PC-9 (cell line): ENCODE measurements at regions of chr18 and their contacts with region 1.

Region 1: GRCh38 chr18:5998907-5999306 is 103.6 kb upstream of the TMEM200C start:
- DNase-seq: no peak
- H3K4me3 ChIP-seq: no peak overlapping the region
- H3K27ac ChIP-seq: no peak overlapping the region
- H3K4me1 ChIP-seq: no peaks in the 10 kb centered on the region
- H3K27me3 ChIP-seq: peaks cover 23% of the 10 kb centered on the region
- CTCF ChIP-seq: no peak

Region 2: GRCh38 chr18:5417342-5417741 is 581.6 kb before region 1 on chr18:
- CTCF ChIA-PET with region 1: no interaction called
- POLR2A ChIA-PET with region 1: no interaction called
- intact Hi-C with region 1: loop called (anchors 10 kb)
- DNase-seq: no peak
- H3K4me3 ChIP-seq: no peak overlapping the region
- H3K27ac ChIP-seq: no peak overlapping the region
- H3K4me1 ChIP-seq: no peaks in the 10 kb centered on the region
- H3K27me3 ChIP-seq: peaks cover 17% of the 10 kb centered on the region; the same call in 1 of the 2 replicates
- CTCF ChIP-seq: no peak

Region 3: GRCh38 chr18:5851998-5852397 is 146.9 kb before region 1 on chr18:
- CTCF ChIA-PET with region 1: no interaction called
- POLR2A ChIA-PET with region 1: no interaction called
- intact Hi-C with region 1: no loop called
- DNase-seq: no peak
- H3K4me3 ChIP-seq: no peak overlapping the region
- H3K27ac ChIP-seq: no peak overlapping the region
- H3K4me1 ChIP-seq: no peaks in the 10 kb centered on the region
- H3K27me3 ChIP-seq: no peaks in the 10 kb centered on the region; the same call in 1 of the 2 replicates
- CTCF ChIP-seq: no peak

Region 4: DNA sequence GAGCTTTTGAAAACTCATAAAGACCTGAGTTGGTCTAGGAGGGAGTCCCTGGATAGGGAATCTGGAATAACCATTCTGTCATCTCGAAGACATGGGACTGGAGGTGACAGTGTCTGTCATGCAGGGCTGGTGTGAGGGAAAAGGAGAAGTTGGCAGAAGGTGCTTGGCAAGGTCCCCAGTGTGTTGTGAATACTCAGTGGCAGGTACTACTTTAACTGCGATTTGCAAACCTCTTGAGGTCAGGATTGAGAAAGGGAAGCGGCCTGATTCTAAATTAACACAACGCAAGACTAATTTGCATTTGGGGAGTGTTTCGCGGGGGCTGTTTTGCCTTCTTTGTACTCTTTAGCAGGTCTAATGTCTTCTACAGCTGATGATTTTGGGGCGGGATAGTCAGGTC is 26.6 kb before region 1 on chr18:
- CTCF ChIA-PET with region 1: no interaction called
- POLR2A ChIA-PET with region 1: no interaction called
- intact Hi-C with region 1: no loop called
- DNase-seq: no peak
- H3K4me3 ChIP-seq: no peak overlapping the region
- H3K27ac ChIP-seq: no peak overlapping the region
- H3K4me1 ChIP-seq: no peaks in the 10 kb centered on the region
- H3K27me3 ChIP-seq: peaks cover 39% of the 10 kb centered on the region
- CTCF ChIP-seq: no peak

Region 5: DNA sequence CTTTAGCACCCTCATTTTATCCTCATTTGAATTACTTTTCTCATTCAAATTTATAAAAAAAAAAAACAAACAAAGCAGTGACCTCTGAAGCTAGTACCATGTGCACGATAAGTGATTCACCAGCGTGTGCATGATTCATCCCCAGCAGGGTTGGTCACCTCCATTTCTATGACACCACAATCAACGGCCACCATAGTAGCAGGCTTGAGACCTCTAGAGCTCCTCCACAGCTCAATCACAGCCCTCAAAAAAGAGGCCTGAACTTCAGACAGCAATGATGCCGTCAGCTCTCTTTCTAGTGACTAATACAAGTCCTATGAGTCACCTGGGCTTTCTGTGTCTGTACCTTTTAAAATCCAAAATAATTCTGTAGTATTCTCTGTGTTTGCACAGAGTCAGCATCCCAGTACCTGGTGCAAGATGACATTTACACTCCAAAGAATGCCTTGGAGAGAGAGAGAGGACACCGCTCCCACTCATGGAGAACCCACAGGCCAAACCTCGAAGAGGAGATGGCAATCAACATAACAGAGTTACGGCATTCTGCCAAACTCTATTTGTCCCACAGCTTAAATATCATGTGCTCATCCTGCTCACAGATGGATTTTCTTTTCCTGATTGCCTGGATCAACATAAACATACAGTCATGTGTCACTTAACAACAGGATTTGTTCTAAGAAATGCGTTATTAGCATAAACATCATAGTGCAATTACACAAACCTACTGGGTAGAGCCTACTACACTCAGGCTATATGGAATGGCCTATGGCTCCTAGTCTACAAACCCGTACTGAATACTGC is 357.1 kb after region 1 on chr18:
- CTCF ChIA-PET with region 1: no interaction called
- POLR2A ChIA-PET with region 1: no interaction called
- intact Hi-C with region 1: no loop called
- DNase-seq: no peak
- H3K4me3 ChIP-seq: no peak overlapping the region
- H3K27ac ChIP-seq: no peak overlapping the region
- H3K4me1 ChIP-seq: no peaks in the 10 kb centered on the region
- H3K27me3 ChIP-seq: no peaks in the 10 kb centered on the region
- CTCF ChIP-seq: no peak